ENCODE measurements at regions of chr12 and their contacts with region 1.

Region 1: DNA sequence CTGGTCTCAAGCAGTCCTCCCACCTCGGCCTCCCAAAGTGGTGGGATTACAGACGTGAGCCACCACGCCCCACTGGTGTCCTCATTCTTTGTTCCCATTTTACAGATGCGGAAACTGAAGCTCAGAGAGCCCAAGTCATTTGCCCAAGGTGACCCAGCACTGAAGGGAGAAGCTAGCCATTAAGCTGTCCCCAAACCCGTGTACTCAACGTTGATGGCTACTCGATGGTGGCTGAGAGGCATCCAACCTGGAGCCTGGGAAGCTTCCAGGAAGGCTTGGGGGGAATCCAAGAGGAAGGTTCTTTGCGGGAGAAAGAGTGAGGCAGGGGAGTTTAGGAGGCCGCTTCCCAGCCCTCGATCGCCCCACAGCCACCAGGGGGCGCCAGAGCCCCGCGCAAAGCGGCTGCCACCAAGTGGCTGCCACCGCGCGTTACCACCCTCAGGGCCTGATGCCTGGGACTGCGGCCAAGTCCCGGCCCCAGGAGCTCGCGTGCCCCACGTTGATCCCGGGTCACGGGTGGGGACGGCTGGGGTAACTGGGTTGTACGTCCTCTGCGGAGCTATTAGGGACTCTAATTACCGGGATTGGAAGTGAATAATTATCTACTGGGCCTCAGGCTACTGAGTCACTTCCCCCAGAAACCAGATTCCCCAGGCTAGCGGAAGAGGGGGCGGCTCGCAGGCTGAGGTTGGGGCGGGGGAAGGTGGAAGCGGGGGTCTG is 8.8 kb upstream of the SH2B3 start:
- DNase-seq: peak; percentile 86
- H3K4me3 Mint-ChIP-seq: peak overlapping the region; percentile 39
- H3K27ac Mint-ChIP-seq: no peak overlapping the region
- H3K4me1 Mint-ChIP-seq: peaks cover 21% of the 10 kb centered on the region
- H3K27me3 Mint-ChIP-seq: no peaks in the 10 kb centered on the region

Region 2: GRCh38 chr12:111384596-111384995 is 12.3 kb before region 1 on chr12:
- CTCF ChIA-PET with region 1: interaction called, 26 read pairs
- POLR2A ChIA-PET with region 1: no interaction called
- DNase-seq: no peak
- H3K4me3 Mint-ChIP-seq: no peak overlapping the region
- H3K27ac Mint-ChIP-seq: no peak overlapping the region
- H3K4me1 Mint-ChIP-seq: no peaks in the 10 kb centered on the region
- H3K27me3 Mint-ChIP-seq: peaks cover 10% of the 10 kb centered on the region

Region 3: GRCh38 chr12:111434680-111435338 is 37.9 kb after region 1 on chr12:
- CTCF ChIA-PET with region 1: interaction called, 16 read pairs
- POLR2A ChIA-PET with region 1: no interaction called
- DNase-seq: peak; percentile 88
- H3K4me3 Mint-ChIP-seq: peak overlapping the region; percentile 64
- H3K27ac Mint-ChIP-seq: peak overlapping the region; percentile 98
- H3K4me1 Mint-ChIP-seq: peaks cover 93% of the 10 kb centered on the region
- H3K27me3 Mint-ChIP-seq: no peaks in the 10 kb centered on the region

Region 4: GRCh38 chr12:111451649-111452129 is 54.8 kb after region 1 on chr12:
- CTCF ChIA-PET with region 1: interaction called, 79 read pairs
- POLR2A ChIA-PET with region 1: interaction called, 5 read pairs
- DNase-seq: peak; percentile 47
- H3K4me3 Mint-ChIP-seq: no peak overlapping the region
- H3K27ac Mint-ChIP-seq: peak overlapping the region; percentile 10
- H3K4me1 Mint-ChIP-seq: peaks cover 41% of the 10 kb centered on the region
- H3K27me3 Mint-ChIP-seq: no peaks in the 10 kb centered on the region

Region 5: DNA sequence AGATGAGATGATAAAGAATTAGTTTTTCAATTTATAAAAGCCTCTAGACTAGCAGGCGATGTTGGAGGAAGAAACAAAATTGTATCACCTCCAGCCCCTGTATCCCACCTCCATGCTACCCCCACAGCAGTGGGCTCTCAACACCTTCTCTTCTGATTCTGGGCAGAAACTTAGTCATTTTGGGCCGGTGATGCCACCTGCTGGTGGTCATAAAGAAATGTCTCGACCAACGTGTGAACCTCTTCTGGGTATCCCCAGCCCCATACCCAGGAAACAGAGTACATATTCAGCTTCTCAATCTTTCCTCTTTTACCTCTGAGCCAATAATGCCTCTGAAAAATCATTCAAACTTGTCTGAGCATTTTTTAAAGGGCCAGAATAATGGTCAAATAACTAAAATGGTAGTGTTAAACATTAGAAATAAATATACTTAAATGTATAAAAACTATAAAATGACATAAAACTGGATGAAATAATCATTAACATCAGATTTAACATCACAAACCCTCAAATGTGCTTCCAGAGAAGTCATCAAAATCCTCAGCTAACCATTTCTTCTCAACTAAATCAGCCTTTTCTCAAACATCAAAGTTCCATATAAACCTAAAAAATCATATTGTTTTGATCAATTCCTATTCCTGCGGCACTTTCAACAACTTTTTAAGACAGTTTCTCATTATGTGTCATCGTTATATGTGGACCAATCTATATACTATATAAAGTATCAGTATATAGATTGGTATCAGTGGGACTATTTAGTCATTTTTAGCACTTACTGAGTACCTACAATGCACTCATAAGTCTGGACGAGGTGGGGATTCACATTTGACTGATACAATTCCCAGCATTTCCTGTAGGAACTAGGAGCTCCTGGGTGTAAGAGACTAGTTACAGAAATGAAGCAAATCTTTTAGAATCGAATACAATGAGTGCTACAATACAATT is 132.8 kb after region 1 on chr12:
- CTCF ChIA-PET with region 1: interaction called, 20 read pairs
- POLR2A ChIA-PET with region 1: interaction called, 9 read pairs
- DNase-seq: peak; percentile 68
- H3K4me3 Mint-ChIP-seq: no peak overlapping the region
- H3K27ac Mint-ChIP-seq: no peak overlapping the region
- H3K4me1 Mint-ChIP-seq: peaks cover 3% of the 10 kb centered on the region
- H3K27me3 Mint-ChIP-seq: no peaks in the 10 kb centered on the region

Region 6: DNA sequence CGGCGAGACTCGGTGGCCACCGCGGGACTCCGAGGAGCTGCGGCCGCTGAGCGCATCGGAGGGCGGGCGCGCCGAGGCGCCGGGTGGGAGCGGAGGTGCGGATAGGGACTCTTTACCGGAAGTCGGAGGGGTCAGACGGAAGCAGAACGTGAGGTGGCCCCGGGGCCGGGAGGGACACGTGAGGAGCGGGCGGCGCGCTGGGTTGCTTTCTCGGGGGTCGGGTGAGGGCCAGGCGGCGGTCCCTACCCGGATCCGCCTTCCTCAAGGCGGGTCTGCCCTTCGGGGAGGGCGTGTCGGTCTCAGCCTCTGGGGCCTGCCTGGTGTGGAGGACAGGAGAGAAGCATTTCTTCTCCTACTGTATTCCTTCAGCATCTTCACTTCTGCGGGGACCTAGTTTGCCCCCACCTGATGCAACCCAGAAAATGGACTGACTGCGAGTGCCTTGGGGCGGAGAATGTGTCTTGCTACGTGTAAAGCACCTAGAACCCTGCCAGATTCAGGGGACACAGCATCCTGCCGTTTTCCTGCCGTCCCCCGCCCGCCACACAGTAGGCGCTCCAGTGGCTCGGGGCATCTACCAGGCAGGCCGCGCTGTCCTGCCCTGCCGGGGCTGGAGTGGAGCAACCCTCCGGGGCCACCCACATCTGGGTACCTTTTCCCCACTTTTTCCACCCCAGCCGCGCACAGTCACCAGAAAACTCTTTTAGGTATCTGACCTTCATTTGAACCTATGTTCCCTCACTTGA is 202.7 kb after region 1 on chr12:
- CTCF ChIA-PET with region 1: no interaction called
- POLR2A ChIA-PET with region 1: no interaction called
- DNase-seq: peak; percentile 85
- H3K4me3 Mint-ChIP-seq: peak overlapping the region; percentile 79
- H3K27ac Mint-ChIP-seq: peak overlapping the region; percentile 87
- H3K4me1 Mint-ChIP-seq: peaks cover 31% of the 10 kb centered on the region
- H3K27me3 Mint-ChIP-seq: no peaks in the 10 kb centered on the region

Measured in activated CD4-positive, alpha-beta T cell treated with anti-CD3 and anti-CD28 coated beads, Interleukin-2, amount 10 ng/mL, durations not matched to agents 7 days and 5 days (primary cell).